Mammary epithelial cell (primary cell): ENCODE measurements at regions of chr5 and their contacts with region 1.

Region 1: DNA sequence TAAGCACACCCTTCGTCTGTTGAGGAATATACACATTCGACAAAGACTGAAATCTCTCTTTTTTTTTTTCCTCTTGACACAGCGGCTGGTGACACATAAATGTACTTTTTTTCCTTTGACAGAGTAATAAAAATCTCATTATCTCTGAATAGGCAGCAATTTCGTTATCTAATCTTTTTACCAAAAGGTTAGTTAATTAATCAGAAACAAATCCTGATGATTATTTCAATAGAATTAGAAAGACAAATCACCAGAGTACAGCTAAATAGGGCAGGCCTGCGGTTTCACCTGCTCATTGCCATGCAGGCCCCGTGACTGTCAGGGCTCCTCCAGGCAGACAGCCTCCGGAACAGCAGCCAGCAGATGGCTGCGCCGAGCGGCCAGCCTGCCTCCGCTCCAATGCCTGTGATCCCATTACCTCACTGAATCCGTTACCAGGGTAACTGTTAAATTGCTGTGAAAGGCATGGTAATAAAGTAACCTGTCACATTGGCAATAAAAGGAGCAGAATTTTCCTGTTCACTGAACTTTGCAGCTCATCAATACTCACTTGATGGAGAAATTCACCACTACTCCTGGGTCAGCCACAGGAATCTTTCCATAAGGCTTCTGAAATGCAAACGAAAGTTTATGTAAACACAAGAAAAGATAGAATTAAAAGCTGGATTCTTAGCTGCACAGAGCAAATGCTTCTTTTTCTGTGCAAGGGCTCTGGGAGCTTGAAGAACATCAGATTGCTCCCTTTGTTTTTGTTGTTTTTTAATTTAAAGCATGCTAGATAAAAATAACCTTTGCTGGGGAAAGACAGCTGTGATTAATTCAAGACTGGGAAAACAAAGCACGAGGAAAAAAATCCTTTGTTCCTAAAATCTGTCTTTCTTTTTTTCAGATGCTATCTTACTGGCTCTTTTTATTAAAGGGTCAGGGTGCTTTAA is 666.4 kb upstream of the ZNF608 start:
- DNase-seq: peak; percentile 84
- H3K4me3 ChIP-seq: no peak overlapping the region
- H3K27ac ChIP-seq: peak overlapping the region; percentile 99
- H3K4me1 ChIP-seq: peaks cover 50% of the 10 kb centered on the region
- H3K27me3 ChIP-seq: no peaks in the 10 kb centered on the region
- CTCF ChIP-seq: peak; percentile 41 to 75

Region 2: DNA sequence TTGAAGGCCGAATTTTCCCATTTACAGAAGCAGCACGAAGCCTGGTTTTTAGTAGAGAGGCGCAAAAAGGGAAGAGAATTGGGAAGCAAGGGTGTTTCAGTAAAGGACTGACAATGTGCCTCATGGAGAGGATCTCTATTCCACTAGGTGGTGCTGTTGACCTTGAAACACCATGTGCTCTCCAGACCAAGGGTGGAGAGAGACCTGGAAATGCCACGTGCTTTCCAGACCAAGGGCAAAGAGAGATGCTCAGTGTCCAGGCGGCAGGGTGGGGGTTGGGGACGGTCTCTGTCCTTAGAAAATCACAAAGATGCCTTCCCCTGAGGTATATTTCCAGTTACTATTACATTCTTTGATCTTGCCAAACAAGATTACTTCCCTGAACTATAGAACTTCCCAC is 1475.6 kb before region 1 on chr5:
- CTCF ChIA-PET with region 1: no interaction called
- dilution Hi-C with region 1: no loop called
- in situ Hi-C with region 1: no loop called
- intact Hi-C with region 1: loop called (anchors 1 kb)
- DNase-seq: peak; percentile 64
- H3K4me3 ChIP-seq: no peak overlapping the region
- H3K27ac ChIP-seq: no peak overlapping the region
- H3K4me1 ChIP-seq: no peaks in the 10 kb centered on the region
- H3K27me3 ChIP-seq: no peaks in the 10 kb centered on the region
- CTCF ChIP-seq: peak; percentile 54 to 73

Region 3: DNA sequence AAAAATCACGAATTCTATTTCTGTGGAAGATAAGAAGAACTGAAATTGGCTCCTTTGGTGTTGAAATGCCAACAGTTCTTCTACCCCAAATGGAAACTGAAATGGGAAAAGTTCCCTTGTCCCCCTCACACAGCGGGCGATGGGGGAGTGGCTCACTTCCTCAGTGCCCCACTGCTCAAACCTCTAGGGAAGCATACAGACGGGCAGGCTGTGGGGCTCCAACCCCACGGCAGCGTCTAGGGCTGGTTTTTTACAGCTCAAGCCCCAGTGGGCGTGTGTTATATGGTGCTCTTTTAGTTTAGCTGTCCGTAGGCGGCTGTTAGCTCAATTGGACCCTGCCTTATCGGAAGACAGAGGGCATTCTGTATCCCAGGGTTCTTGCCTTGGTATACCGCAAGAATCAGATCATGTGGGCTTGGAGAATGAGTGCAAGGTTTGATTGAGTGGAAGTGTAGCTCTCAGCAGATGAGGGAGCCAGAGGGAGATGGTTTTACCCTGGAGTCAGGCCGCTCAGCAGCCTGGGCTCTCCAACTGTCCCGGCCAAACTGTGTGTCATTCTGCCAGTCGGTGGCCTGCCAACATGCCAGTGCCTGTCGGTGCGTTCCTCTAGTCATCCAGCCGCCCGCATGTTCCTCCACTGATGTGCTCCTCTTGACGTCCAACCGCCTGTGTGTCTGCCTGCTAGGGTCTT is 500.0 kb before region 1 on chr5:
- CTCF ChIA-PET with region 1: no interaction called
- dilution Hi-C with region 1: no loop called
- in situ Hi-C with region 1: no loop called
- intact Hi-C with region 1: loop called (anchors 5 kb)
- DNase-seq: peak; percentile 86
- H3K4me3 ChIP-seq: no peak overlapping the region
- H3K27ac ChIP-seq: no peak overlapping the region
- H3K4me1 ChIP-seq: peaks cover 12% of the 10 kb centered on the region
- H3K27me3 ChIP-seq: no peaks in the 10 kb centered on the region
- CTCF ChIP-seq: peak in 1 of 2 donors; percentile 43

Region 4: GRCh38 chr5:125214080-125214479 is 198.7 kb before region 1 on chr5:
- CTCF ChIA-PET with region 1: no interaction called
- dilution Hi-C with region 1: no loop called
- in situ Hi-C with region 1: no loop called
- intact Hi-C with region 1: loop called (anchors 5 kb)
- DNase-seq: no peak
- H3K4me3 ChIP-seq: no peak overlapping the region
- H3K27ac ChIP-seq: no peak overlapping the region
- H3K4me1 ChIP-seq: peaks cover 16% of the 10 kb centered on the region
- H3K27me3 ChIP-seq: no peaks in the 10 kb centered on the region
- CTCF ChIP-seq: no peak

Region 5: GRCh38 chr5:125461641-125462072 is 48.8 kb after region 1 on chr5:
- CTCF ChIA-PET with region 1: no interaction called
- dilution Hi-C with region 1: no loop called
- in situ Hi-C with region 1: no loop called
- intact Hi-C with region 1: no loop called
- DNase-seq: peak; percentile 13
- H3K4me3 ChIP-seq: no peak overlapping the region
- H3K27ac ChIP-seq: no peak overlapping the region
- H3K4me1 ChIP-seq: no peaks in the 10 kb centered on the region
- H3K27me3 ChIP-seq: no peaks in the 10 kb centered on the region
- CTCF ChIP-seq: no peak

Region 6: GRCh38 chr5:125484742-125485641 is 72.2 kb after region 1 on chr5:
- CTCF ChIA-PET with region 1: no interaction called
- dilution Hi-C with region 1: no loop called
- in situ Hi-C with region 1: no loop called
- intact Hi-C with region 1: loop called (anchors 2 kb)
- DNase-seq: peak; percentile 99
- H3K4me3 ChIP-seq: peak overlapping the region; percentile 6 to 17 (median 8)
- H3K27ac ChIP-seq: peak overlapping the region; percentile 97
- H3K4me1 ChIP-seq: peaks cover 38% of the 10 kb centered on the region
- H3K27me3 ChIP-seq: no peaks in the 10 kb centered on the region
- CTCF ChIP-seq: no peak

Region 7: DNA sequence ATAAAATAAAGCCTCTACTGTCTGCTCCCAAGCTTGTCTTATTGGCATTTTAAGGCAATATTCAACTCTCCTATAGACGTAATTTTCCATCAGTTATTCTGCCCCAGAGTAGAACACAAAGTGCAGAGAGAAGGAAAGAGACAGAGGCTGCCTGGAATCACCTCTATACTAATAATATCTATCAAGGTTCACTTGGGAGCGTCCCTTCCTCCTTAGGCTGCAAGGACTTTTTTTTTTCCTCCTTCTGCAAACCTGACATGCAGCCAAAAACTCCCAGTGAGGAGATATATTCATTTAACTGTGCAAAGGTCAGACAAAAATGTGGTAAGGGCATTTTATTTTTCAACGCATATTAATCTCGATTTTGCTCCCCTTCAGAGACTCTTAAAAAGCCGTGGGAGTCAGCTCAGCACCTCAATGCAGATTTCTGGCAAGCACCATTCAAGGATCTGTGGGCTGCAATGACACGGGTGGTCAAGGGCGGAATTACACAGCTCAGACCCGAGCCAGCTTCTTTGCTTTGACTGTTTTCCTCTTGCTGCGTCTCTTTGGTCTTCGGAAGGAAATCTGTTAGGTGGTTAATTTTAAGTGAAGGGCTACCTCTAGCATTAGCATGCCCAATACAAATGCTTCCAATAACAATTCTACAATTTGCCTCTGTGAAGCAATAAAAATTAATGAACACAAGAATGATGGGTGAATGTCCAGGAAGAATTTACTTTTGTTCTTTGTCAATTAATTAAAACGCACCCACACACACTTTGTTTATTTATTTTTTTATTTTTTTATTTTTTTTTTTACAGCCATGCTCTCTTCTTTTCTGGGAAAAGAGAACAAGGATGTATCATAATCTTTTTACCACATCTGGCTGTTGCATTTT is 422.7 kb after region 1 on chr5:
- CTCF ChIA-PET with region 1: no interaction called
- dilution Hi-C with region 1: no loop called
- in situ Hi-C with region 1: no loop called
- intact Hi-C with region 1: loop called (anchors 10 kb)
- DNase-seq: no peak
- H3K4me3 ChIP-seq: no peak overlapping the region
- H3K27ac ChIP-seq: no peak overlapping the region
- H3K4me1 ChIP-seq: no peaks in the 10 kb centered on the region
- H3K27me3 ChIP-seq: no peaks in the 10 kb centered on the region
- CTCF ChIP-seq: peak; percentile 60 to 63